Activated CD4-positive, alpha-beta T cell treated with anti-CD3 and anti-CD28 coated beads, Interleukin-2, amount 10 ng/mL, durations not matched to agents 24 days and 14 days (primary cell): ENCODE measurements at regions of chr9 and their contacts with region 1.

Region 1: DNA sequence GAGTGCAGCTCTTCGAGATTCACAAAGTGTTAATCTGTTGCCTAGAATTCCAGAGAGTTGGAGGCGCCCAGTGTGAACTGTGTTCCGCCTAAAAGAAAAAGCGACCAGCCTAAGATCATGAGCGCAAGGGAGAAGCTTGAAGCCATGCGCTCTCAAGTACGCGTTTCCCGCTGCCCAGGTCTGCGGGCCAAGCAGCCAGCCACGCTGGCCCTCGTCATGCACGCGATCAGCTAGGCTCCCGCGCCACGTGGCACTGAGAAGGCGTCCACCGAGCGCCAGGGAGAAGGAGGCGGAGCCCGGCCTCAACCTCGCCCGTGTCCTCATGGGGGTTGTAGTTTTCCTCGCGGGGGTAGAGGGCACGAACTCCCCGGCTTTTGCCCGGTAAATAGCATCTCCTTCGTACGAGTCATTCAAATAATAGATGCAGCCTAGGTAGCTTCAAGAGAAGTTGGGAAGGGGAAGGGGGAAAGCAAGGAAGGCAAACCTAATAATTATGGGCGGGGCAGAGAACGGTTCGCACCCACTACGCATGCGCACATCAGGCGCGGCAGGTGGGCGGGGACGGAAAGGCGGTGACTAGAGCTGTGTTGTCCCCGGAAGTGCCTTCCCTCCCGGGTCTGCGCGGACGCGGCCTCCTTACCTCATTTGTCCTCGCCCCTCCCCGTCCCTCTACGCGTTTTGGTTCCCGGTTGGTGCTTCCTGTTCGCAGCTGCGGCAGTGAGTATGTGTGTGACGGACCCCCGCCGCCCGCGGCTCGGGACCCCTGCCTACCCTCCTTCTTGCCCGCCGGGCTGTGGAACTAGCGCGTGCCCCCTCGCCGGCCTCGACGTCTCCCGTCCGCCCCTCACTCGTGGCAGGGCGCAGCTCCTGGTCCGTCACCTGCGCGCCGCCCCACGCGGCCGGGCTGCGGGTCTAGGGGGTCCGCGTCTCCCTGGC is at the start of gene ZCCHC7:
- DNase-seq: peak; percentile 97
- H3K4me3 Mint-ChIP-seq: peak within 1 kb of the TSS; percentile 92
- H3K27ac Mint-ChIP-seq: peak within 1 kb of the TSS; percentile 98
- H3K4me1 Mint-ChIP-seq: peaks cover 17% of the 10 kb centered on the region
- H3K27me3 Mint-ChIP-seq: no peaks in the 10 kb centered on the region
- total RNA-seq, gene ZCCHC7: 24.2 and 25.3 TPM in 2 replicates

Region 2: GRCh38 chr9:37079370-37080164 is 40.6 kb before region 1 on chr9:
- intact Hi-C with region 1: loop called (anchors 1 kb)
- DNase-seq: peak; percentile 97
- H3K4me3 Mint-ChIP-seq: peak overlapping the region; percentile 95
- H3K27ac Mint-ChIP-seq: peak overlapping the region; percentile 96
- H3K4me1 Mint-ChIP-seq: peaks cover 23% of the 10 kb centered on the region
- H3K27me3 Mint-ChIP-seq: peaks cover 7% of the 10 kb centered on the region

Region 3: DNA sequence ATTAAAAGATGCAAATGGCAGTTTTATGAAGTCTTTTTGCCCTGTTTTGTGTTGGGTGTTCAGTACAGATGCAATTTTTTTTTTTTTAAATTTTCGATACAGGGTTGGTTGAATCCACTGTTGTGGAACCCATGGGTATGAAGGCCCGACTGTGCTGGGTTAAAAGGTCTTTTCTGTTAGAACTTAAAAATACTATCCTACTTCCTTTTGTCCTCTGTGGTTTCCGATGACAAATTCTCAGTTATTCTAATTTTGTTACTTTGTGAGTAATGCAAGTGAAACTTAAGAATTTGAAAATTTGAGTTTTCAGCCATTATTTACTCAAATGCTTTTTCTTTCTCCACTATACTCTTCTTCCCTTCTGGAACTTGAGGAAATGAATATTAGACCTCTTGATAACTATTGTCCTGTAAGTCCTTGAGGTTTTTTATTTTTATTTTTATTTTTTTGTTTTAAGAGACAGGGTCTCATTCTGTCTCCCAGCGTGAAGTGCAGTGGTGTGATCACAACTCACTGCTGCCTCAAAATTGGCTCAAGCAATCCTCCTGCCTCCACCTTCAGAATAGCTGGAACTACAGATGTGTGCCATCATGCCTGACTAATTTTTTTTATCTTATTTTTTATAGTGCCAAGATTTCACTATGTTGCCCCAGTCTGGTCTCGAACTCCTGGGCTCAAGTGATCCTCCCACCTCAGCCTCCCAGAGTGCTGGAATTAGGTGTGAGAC is 67.7 kb after region 1 on chr9:
- intact Hi-C with region 1: loop called (anchors 2 kb)
- DNase-seq: no peak
- H3K4me3 Mint-ChIP-seq: peak overlapping the region; percentile 82
- H3K27ac Mint-ChIP-seq: peak overlapping the region; percentile 90
- H3K4me1 Mint-ChIP-seq: peaks cover 22% of the 10 kb centered on the region
- H3K27me3 Mint-ChIP-seq: no peaks in the 10 kb centered on the region

Region 4: DNA sequence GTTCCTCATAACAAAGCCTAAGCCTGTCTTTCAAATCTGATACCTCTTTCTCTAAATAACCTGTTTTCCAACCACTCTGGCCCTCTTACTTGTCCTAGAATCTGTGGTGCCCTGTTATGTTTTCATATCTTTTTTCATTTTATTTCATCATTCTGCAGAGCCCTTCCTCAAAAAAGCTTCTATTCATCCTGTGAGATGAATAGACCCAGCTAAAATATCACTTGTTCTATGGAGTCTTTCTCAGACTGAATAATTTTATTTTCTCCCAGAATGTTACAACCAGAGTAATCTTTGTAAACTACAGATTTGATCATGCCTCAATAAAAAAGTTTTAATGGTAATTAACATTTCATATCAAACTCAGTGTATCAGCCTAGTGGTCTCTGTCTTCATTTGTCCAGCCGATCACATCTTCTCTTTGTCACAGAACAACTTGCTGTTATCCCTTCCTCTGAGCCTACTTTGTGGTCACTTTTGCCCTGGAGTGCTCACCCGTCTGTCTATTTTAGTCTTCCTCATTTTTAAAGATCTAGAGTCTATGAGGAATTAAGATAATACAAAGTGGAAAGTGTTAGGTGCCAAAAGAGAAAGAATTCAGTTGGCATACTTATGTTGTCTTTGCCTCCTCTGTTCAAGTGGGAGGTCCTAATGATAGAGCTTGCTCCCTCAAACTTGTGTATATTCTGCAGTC is 78.0 kb after region 1 on chr9:
- intact Hi-C with region 1: no loop called
- DNase-seq: no peak
- H3K4me3 Mint-ChIP-seq: no peak overlapping the region
- H3K27ac Mint-ChIP-seq: peak overlapping the region; percentile 18
- H3K4me1 Mint-ChIP-seq: peaks cover 40% of the 10 kb centered on the region
- H3K27me3 Mint-ChIP-seq: no peaks in the 10 kb centered on the region